Activated CD4-positive, alpha-beta T cell treated with anti-CD3 and anti-CD28 coated beads for 36 hours (primary cell): ENCODE measurements at regions of chr22 and their contacts with region 1.

Region 1: DNA sequence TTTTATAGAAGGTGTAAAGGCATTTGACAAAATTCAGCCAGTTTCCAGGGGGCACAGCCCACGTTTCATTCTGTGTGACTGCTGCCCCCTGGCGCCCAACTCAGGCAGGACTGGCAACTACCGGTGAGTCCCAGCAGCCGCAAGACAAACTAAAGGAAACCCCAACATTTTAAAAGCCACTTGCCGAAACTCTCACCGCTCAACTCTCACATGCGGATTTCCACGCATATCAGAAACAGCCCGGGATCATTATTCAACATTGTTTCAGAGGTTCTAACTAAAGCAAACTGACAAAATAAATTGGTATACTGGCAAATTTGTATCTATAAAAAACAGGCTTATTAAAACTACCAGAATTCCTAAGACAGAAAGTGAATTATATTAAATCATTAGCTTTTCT is 48.2 kb downstream of the MORC2 start:
- DNase-seq: peak; percentile 91
- ATAC-seq: peak; percentile 83
- H3K4me3 Mint-ChIP-seq: peak overlapping the region; percentile 45
- H3K27ac Mint-ChIP-seq: no peak overlapping the region
- H3K4me1 Mint-ChIP-seq: peaks cover 9% of the 10 kb centered on the region
- H3K27me3 Mint-ChIP-seq: no peaks in the 10 kb centered on the region

Region 2: GRCh38 chr22:30763815-30764686 is 156.4 kb before region 1 on chr22:
- CTCF ChIA-PET with region 1: interaction called, 17 read pairs
- POLR2A ChIA-PET with region 1: no interaction called
- intact Hi-C with region 1: loop called (anchors 1 kb)
- DNase-seq: peak; percentile 77
- ATAC-seq: peak; percentile 96
- H3K4me3 Mint-ChIP-seq: no peak overlapping the region
- H3K27ac Mint-ChIP-seq: no peak overlapping the region
- H3K4me1 Mint-ChIP-seq: no peaks in the 10 kb centered on the region
- H3K27me3 Mint-ChIP-seq: no peaks in the 10 kb centered on the region

Region 3: GRCh38 chr22:30908051-30908461 is 12.4 kb before region 1 on chr22:
- CTCF ChIA-PET with region 1: interaction called, 43 read pairs
- POLR2A ChIA-PET with region 1: no interaction called
- intact Hi-C with region 1: no loop called
- DNase-seq: no peak
- ATAC-seq: no peak
- H3K4me3 Mint-ChIP-seq: no peak overlapping the region
- H3K27ac Mint-ChIP-seq: no peak overlapping the region
- H3K4me1 Mint-ChIP-seq: peaks cover 2% of the 10 kb centered on the region
- H3K27me3 Mint-ChIP-seq: no peaks in the 10 kb centered on the region

Region 4: DNA sequence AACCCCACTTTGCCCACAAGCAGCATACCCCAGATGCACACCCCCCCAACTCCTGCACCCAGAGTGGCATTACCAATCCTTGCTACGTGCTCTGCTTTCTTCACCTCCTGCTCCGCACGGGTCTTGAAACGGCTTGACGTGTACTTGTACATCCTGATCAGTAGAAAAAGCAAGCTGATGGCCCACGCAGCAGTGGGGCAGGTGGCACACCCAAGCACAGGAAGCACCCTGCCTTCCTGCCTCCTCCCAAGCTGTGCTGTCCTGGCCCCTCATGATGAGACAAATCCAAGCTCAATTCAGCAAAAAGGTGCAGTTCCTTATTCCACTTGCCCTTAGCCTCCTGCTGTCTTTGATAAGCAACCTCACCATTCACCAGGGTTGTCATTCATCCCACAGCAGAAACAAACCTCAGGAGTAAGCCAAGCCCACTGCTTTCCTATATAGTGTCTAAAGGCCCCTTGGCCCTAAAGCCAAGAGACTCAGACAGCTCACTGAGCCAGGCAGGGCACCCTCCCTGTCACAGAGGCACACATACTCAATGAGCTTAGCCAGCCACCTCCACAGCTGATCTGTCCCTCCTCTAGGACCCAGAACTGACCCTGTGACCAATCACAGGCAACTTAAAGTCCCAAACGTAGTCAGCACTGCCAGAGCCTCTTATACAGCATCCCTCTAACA is 20.4 kb after region 1 on chr22:
- CTCF ChIA-PET with region 1: interaction called, 10 read pairs
- POLR2A ChIA-PET with region 1: no interaction called
- intact Hi-C with region 1: no loop called
- DNase-seq: peak; percentile 67
- ATAC-seq: peak; percentile 77
- H3K4me3 Mint-ChIP-seq: peak overlapping the region; percentile 46
- H3K27ac Mint-ChIP-seq: peak overlapping the region; percentile 85
- H3K4me1 Mint-ChIP-seq: peaks cover 65% of the 10 kb centered on the region
- H3K27me3 Mint-ChIP-seq: no peaks in the 10 kb centered on the region